ENCODE measurements at regions of chr1 and their contacts with region 1.

Region 1: DNA sequence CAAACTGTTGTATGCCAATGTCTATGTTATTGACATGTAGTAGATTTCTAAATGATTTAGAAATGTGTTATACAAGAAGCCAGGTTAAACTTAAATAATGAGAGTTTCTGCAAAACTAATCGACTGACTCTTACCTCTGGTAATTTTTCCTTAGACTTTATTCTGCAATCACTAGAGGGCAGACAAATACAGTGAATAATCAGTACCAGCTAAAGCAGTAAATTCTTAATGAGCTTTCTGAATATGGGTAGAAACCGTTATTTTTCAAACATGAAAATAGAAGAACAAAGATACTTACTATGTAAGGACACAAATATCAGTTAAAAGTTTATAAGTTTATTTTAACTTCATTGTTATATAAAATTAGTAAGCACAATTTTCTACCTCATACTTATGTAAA is 97.9 kb upstream of the RGS1 start:
- DNase-seq: no peak
- H3K4me3 Mint-ChIP-seq: no peak overlapping the region
- H3K27ac Mint-ChIP-seq: no peak overlapping the region
- H3K4me1 Mint-ChIP-seq: no peaks in the 10 kb centered on the region
- H3K27me3 Mint-ChIP-seq: no peaks in the 10 kb centered on the region

Region 2: DNA sequence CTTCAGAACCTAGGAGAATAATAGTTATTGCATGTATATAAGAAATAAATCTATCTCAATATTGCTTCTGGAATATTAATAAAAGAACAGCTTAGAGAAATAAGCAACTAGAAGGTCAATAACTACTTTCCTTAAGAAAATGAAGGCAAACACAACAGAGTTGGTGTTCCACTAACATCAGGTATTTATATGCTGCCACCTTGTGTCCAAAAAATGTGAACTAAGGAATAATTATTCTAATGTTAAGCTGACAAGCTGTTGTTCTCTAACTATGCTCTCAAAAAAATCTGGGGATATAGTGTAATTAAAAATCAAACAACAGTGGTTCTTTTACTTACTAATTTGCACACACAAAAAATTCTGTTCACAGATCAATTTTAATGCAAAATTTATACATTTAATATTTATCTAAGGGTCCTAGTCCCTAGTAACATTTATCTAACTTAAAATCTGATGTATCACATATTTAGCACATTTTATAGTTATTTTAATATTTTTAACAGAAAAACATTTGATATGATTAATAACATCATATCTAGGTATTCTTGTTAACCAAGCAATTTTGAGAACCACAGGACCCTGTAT is 541.9 kb after region 1 on chr1:
- CTCF ChIA-PET with region 1: interaction called, 6 read pairs
- intact Hi-C with region 1: loop called (anchors 1 kb)
- DNase-seq: no peak
- H3K4me3 Mint-ChIP-seq: no peak overlapping the region
- H3K27ac Mint-ChIP-seq: no peak overlapping the region
- H3K4me1 Mint-ChIP-seq: no peaks in the 10 kb centered on the region
- H3K27me3 Mint-ChIP-seq: no peaks in the 10 kb centered on the region

Region 3: GRCh38 chr1:193031438-193031837 is 553.8 kb after region 1 on chr1:
- CTCF ChIA-PET with region 1: interaction called, 3 read pairs
- intact Hi-C with region 1: loop called (anchors 5 kb)
- DNase-seq: no peak
- H3K4me3 Mint-ChIP-seq: no peak overlapping the region
- H3K27ac Mint-ChIP-seq: no peak overlapping the region
- H3K4me1 Mint-ChIP-seq: peaks cover 15% of the 10 kb centered on the region
- H3K27me3 Mint-ChIP-seq: no peaks in the 10 kb centered on the region

Region 4: DNA sequence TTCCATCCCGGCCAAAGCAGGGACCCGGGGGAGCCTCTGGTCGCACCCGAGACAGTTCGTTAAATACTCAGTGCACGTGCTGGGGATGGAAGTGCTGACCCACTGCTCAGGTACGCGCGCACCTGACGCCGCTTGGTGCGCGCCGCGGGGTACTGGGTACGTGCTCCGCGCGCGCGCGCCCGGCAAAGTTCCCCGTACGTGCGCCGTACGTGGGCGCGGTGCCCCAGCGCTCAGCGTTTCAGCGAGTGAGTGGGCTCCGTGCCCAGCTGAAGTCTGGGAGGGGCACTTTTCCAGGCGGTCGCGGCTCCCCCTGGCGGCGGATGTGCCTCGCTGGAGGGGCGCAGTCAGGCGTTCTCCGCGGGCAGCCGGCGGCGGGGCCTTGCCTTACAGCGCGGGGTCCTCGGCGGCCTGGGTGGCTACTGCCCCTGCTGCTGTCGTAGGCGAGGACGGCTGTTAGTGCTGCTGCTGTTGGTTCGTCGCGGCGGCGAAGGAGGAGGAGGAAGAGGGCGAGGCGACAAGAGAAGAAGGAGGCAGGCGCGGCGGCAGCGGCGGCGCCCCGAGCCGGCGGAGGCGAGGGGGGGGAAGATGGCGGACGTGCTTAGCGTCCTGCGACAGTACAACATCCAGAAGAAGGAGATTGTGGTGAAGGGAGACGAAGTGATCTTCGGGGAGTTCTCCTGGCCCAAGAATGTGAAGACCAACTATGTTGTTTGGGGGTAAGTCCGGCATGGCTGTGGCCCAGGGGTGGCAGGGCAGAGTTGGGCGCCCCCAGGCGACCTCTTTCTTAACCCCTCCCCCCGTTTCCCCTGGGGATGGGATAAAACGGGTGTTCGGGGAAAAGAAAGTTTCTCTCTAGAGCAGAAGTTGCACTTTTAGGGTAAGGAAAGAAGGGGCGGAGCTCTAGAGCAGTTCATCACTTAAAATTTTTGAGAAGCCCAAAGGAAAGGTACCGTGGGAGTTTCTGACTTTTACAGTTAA is 644.3 kb after region 1 on chr1 and contains the start of gene CDC73:
- CTCF ChIA-PET with region 1: no interaction called
- intact Hi-C with region 1: loop called (anchors 1 kb)
- DNase-seq: peak; percentile 97
- H3K4me3 Mint-ChIP-seq: peak within 1 kb of the TSS; percentile 92
- H3K27ac Mint-ChIP-seq: peak within 1 kb of the TSS; percentile 92
- H3K4me1 Mint-ChIP-seq: peaks cover 43% of the 10 kb centered on the region
- H3K27me3 Mint-ChIP-seq: peaks cover 1% of the 10 kb centered on the region
- total RNA-seq, gene CDC73: 39.0 to 45.2 TPM

Measured in activated naive CD4-positive, alpha-beta T cell treated with anti-CD3 and anti-CD28 coated beads for 36 hours (primary cell).